Psoas muscle (tissue), 8 donors: ENCODE measurements at regions of chr1 and their contacts with region 1.

Region 1: GRCh38 chr1:222171005-222171404 is 376.9 kb downstream of the HHIPL2 start:
- DNase-seq: no peak
- ATAC-seq: peak; percentile 78 to 87 (median 82)
- H3K4me3 ChIP-seq: no peak overlapping the region
- H3K27ac ChIP-seq: no peak overlapping the region
- H3K4me1 ChIP-seq: no peaks in the 10 kb centered on the region
- H3K27me3 ChIP-seq: no peaks in the 10 kb centered on the region
- CTCF ChIP-seq: peak; percentile 65

Region 2: GRCh38 chr1:222048094-222048595 is 122.9 kb before region 1 on chr1:
- intact Hi-C with region 1: loop called in 1 of 2 experiments (anchors 10 kb)
- DNase-seq: no peak
- ATAC-seq: no peak
- H3K4me3 ChIP-seq: no peak overlapping the region
- H3K27ac ChIP-seq: no peak overlapping the region
- H3K4me1 ChIP-seq: peaks cover 14% of the 10 kb centered on the region
- H3K27me3 ChIP-seq: no peaks in the 10 kb centered on the region
- CTCF ChIP-seq: no peak

Region 3: DNA sequence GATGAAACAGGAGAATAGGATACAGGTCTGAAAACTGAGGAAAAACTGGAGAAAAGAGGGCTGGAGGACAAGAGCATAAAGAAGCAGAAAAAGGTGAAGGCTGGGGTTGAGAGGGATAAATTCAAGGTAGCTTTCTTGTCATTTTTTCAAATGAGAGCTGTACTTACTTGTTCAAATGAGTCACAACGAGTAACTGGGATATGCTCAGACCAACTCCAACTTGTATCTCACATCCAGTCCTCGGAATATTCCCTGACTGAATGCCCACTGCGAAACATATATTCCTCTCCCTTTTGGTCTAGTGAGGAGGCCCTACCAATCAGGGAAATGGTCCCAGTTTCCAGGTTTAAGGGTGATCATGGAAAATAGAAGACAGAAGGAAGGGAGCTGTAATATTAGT is 33.5 kb after region 1 on chr1:
- intact Hi-C with region 1: no loop called
- DNase-seq: no peak
- ATAC-seq: no peak
- H3K4me3 ChIP-seq: no peak overlapping the region
- H3K27ac ChIP-seq: no peak overlapping the region
- H3K4me1 ChIP-seq: no peaks in the 10 kb centered on the region
- H3K27me3 ChIP-seq: no peaks in the 10 kb centered on the region
- CTCF ChIP-seq: no peak